ENCODE measurements at regions of chr14 and their contacts with region 1.

Region 1: DNA sequence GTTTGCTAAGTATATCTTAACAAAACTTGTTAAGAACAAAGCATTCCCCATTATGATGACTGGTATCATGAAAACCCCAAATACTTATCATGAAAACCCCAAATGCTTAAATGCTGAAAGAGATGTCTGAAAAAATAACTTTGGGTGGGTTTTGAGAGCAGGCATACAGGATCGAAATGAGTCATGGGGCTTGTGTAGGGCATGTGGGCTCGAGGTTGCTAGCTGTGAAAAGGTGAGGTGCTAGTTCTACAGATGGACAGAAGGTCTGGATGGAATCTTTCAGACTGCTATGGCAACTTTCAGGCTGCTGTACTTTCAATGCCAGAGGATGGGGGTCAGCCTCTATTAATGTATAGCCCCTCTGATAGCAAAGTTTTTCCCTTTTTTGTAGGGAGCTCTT is 167.8 kb upstream of the MDGA2 start:
- DNase-seq: no peak
- H3K4me3 ChIP-seq: no peak overlapping the region
- H3K27ac ChIP-seq: no peak overlapping the region
- H3K4me1 ChIP-seq: no peaks in the 10 kb centered on the region
- H3K27me3 ChIP-seq: no peaks in the 10 kb centered on the region
- CTCF ChIP-seq: no peak

Region 2: DNA sequence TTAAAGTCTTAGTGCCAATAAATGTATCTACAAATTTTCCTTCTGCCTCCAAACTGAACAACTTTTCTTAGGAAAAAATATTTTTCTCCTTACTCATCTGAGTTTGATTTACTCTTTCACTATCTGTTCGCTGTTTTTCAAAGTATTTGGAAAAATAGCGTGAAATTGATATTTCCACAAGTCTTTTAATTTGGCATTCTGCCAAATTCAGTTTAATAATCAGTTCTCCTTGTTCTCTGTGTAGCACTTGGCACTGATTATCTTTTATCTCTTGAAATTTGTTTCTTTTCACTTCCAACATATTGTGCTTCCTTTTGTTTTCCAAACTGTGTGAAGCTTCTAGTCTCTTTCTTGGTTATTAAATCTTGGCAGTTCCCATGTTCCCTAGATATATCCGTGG is 1751.4 kb before region 1 on chr14:
- CTCF ChIA-PET with region 1: no interaction called
- POLR2A ChIA-PET with region 1: no interaction called
- intact Hi-C with region 1: no loop called
- DNase-seq: no peak
- H3K4me3 ChIP-seq: no peak overlapping the region
- H3K27ac ChIP-seq: no peak overlapping the region
- H3K4me1 ChIP-seq: no peaks in the 10 kb centered on the region
- H3K27me3 ChIP-seq: no peaks in the 10 kb centered on the region
- CTCF ChIP-seq: no peak

Region 3: GRCh38 chr14:47567273-47567672 is 276.0 kb before region 1 on chr14:
- CTCF ChIA-PET with region 1: no interaction called
- POLR2A ChIA-PET with region 1: no interaction called
- intact Hi-C with region 1: no loop called
- DNase-seq: no peak
- H3K4me3 ChIP-seq: no peak overlapping the region
- H3K27ac ChIP-seq: no peak overlapping the region
- H3K4me1 ChIP-seq: no peaks in the 10 kb centered on the region
- H3K27me3 ChIP-seq: no peaks in the 10 kb centered on the region
- CTCF ChIP-seq: no peak

Region 4: DNA sequence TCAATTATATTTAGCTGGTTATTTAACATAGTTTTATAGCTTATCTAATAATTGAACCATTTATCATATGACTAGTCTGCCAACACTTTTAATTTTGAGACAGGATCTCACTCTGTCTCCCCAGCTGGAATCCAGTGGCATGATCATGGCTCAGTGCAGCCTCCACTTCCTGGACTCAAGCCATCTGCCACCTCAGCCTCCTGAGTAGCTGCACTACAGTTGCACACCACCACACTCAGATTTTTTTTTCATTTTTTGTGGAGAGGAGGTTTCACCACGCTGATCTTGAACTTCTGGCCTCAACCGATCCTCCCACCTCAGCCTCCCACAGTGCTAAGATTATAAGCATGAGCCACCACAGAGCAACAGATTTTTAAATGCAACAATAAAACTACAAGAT is 16.4 kb before region 1 on chr14:
- CTCF ChIA-PET with region 1: no interaction called
- POLR2A ChIA-PET with region 1: no interaction called
- intact Hi-C with region 1: loop called (anchors 2 kb)
- DNase-seq: no peak
- H3K4me3 ChIP-seq: no peak overlapping the region
- H3K27ac ChIP-seq: no peak overlapping the region
- H3K4me1 ChIP-seq: no peaks in the 10 kb centered on the region
- H3K27me3 ChIP-seq: no peaks in the 10 kb centered on the region
- CTCF ChIP-seq: no peak

Measured in A673 (cell line).